Dendritic cell treated with granulocyte-macrophage colony-stimulating factor and Interleukin-4, amounts not matched to agents 40 ng/mL and 50 ng/mL, for 4 days (primary cell): ENCODE measurements at regions of chr5 and their contacts with region 1.

Region 1: GRCh38 chr5:128083033-128083810 is at the start of gene SLC12A2:
- H3K4me3 Mint-ChIP-seq: peak within 1 kb of the TSS; percentile 87
- H3K27ac Mint-ChIP-seq: peak within 1 kb of the TSS; percentile 85
- H3K4me1 Mint-ChIP-seq: peaks cover 39% of the 10 kb centered on the region
- H3K27me3 Mint-ChIP-seq: peaks cover 13% of the 10 kb centered on the region

Region 2: DNA sequence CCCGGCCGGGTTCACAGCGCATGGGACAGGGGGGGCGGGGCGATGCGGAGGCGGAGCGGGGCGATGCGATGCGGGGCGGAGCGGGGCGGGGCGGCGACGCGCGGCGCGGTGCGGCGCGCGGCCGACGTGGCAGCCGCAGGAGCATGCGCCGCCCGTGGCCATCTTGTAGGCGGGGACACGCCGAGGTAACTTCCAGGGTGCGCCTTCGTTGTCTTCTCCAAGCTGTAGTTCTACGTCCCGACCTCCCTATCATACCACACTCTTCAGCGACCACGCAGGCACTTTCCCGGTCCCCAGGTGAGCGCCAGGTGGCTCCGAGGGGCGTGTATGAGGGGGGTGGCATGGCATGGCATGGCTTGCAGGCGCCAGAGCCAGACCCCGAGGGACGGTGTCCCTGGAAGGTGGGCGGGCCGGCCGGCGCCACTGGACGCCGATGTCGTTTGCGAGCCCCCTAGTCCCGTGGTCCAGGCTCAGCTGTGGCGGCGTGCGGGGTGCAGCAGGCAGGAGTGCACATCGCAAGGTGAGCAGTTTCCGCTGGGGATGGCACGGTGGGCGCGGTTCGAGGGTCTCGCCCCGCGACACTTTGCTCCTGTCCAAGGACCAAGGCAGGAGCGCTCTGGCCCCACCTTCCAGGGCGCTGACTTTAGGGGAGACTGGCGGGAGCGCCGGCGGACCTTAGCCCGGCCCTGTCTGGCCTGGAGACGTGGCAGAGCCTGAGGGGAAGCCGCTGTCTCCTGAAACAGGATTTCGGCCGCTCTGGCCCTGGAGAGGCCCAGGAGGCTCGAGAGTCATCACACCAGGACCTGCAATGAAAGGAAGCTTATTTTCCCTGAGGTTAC is 565.5 kb before region 1 on chr5 and contains the start of gene PRRC1:
- intact Hi-C with region 1: loop called (anchors 5 kb)
- H3K4me3 Mint-ChIP-seq: peak within 1 kb of the TSS; percentile 92
- H3K27ac Mint-ChIP-seq: peak within 1 kb of the TSS; percentile 91
- H3K4me1 Mint-ChIP-seq: peaks cover 35% of the 10 kb centered on the region
- H3K27me3 Mint-ChIP-seq: peaks cover under 1% of the 10 kb centered on the region

Region 3: GRCh38 chr5:127833999-127834953 is 248.9 kb before region 1 on chr5:
- intact Hi-C with region 1: loop called (anchors 10 kb)
- H3K4me3 Mint-ChIP-seq: no peak overlapping the region
- H3K27ac Mint-ChIP-seq: no peak overlapping the region
- H3K4me1 Mint-ChIP-seq: peaks cover 14% of the 10 kb centered on the region
- H3K27me3 Mint-ChIP-seq: peaks cover 3% of the 10 kb centered on the region

Region 4: DNA sequence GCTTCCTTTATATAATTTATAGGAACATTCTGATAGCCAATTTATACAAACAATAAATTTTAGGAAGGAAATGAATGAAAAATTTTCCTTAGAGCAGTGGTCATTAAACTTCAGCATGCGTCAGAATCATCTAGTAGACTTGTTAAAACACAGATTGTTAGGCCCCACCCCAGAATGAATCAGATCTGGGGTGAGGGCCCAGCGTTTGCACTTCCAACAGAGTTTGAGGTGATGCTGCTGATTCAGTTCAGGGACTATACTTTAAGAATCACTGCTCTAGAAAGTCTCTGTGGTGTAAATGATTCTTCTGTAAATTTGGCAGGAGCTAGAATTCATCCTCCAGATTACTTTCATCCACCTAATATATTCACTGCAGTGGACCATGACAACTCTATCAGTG is 80.8 kb after region 1 on chr5:
- intact Hi-C with region 1: no loop called
- H3K4me3 Mint-ChIP-seq: no peak overlapping the region
- H3K27ac Mint-ChIP-seq: no peak overlapping the region
- H3K4me1 Mint-ChIP-seq: no peaks in the 10 kb centered on the region
- H3K27me3 Mint-ChIP-seq: no peaks in the 10 kb centered on the region

Region 5: DNA sequence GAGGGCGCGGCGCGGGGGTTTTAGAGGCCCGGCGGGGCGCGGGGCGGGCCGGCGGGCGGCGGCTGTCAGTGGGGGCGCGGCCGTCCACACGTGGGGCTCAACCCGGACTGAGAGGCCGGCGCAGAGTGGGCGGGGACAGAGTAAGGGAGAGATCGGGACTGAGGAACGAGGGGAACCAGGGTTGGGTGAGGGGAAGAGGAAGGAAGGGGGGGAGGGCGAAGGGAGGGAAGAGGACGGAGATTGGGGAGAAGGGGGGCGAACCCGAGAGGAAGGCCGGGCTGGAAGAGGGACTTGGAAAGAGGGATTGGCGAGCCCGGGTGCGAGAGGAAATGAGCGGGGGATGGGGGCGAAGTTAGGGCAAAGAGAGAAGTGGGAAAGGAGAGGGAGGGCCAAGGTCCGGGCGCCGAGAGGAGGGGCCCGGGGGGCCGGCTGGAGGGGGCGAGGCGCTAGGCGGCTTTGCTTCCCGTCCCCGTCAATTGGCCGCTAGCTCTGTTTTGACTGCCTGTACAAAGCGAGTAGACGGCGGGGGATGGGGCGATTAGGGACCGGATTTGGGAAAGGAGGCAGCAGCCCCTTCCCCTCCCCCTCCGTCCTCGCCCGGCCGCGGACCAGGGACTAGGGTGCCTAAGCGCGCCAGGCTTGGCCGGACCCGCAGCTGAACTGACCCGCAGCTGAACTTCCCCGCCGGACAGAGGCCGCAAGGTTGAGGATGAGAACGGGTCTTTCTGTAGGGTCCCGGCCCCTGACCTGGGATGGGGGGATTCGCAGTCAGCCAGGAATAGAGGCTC is 455.2 kb after region 1 on chr5:
- intact Hi-C with region 1: loop called (anchors 10 kb)
- H3K4me3 Mint-ChIP-seq: peak overlapping the region; percentile 88
- H3K27ac Mint-ChIP-seq: peak overlapping the region; percentile 68
- H3K4me1 Mint-ChIP-seq: peaks cover 27% of the 10 kb centered on the region
- H3K27me3 Mint-ChIP-seq: peaks cover 45% of the 10 kb centered on the region

Region 6: DNA sequence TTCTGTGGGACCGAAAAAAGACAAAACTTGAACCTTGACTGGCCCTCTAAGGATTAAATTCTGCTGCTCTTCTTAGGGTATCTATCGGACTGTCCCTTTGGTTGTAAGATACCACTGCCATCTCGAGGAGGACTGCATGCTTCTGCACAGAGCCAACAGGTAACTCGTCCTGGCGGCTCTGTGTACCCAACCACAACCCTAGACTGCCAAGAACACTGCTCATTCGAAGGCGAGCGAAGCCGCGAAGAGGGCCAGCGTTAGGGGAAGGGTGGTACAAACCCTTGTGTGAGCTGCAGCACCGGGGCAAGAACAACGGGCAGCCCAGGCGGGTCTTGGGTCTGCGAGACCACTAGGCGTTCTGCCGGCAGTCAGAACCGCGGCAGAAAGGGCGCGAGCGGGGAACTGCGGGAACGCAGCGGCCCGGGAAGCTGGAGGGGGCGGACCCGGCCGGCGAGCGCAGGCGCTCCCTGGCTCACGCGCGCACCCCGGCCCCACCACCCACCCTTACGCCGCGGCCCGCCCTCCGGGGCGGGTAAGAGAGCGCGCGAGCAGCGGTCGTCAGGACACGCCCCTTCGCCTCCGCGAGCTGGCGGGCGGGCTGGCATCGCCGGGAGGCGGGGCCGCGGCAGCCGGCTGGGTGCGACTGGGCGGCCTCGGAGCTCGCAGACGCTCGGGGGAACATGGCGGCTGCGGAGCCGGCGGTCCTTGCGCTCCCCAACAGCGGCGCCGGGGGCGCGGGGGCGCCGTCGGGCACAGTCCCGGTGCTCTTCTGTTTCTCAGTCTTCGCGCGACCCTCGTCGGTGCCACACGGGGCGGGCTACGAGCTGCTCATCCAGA is 1011.1 kb after region 1 on chr5 and contains the start of gene ISOC1:
- intact Hi-C with region 1: loop called (anchors 10 kb)
- H3K4me3 Mint-ChIP-seq: peak within 1 kb of the TSS; percentile 87
- H3K27ac Mint-ChIP-seq: peak within 1 kb of the TSS; percentile 82
- H3K4me1 Mint-ChIP-seq: peaks cover 14% of the 10 kb centered on the region
- H3K27me3 Mint-ChIP-seq: peaks cover 23% of the 10 kb centered on the region